Mammary epithelial cell (primary cell): ENCODE measurements at regions of chrX and their contacts with region 1.

Region 1: GRCh38 chrX:48696301-48697181 is at the start of gene SUV39H1:
- DNase-seq: peak; percentile 88
- H3K4me3 ChIP-seq: peak within 1 kb of the TSS; percentile 51 to 56 (median 56)
- H3K27ac ChIP-seq: peak within 1 kb of the TSS; percentile 66
- H3K4me1 ChIP-seq: peaks cover 7% of the 10 kb centered on the region
- H3K27me3 ChIP-seq: no peaks in the 10 kb centered on the region
- CTCF ChIP-seq: no peak
- total RNA-seq, gene SUV39H1: 2.8 to 11.4 TPM

Region 2: DNA sequence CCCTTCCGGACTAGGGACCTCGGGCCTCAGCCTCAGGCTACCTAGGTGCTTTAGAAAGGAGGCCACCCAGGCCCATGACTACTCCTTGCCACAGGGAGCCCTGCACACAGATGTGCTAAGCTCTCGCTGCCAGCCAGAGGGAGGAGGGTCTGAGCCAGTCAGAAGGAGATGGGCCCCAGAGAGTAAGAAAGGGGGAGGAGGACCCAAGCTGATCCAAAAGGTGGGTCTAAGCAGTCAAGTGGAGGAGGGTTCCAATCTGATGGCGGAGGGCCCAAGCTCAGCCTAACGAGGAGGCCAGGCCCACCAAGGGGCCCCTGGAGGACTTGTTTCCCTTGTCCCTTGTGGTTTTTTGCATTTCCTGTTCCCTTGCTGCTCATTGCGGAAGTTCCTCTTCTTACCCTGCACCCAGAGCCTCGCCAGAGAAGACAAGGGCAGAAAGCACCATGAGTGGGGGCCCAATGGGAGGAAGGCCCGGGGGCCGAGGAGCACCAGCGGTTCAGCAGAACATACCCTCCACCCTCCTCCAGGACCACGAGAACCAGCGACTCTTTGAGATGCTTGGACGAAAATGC is 13.0 kb before region 1 on chrX and contains the start of gene WAS:
- CTCF ChIA-PET with region 1: no interaction called
- dilution Hi-C with region 1: no loop called
- in situ Hi-C with region 1: no loop called
- intact Hi-C with region 1: loop called (anchors 2 kb)
- DNase-seq: no peak
- H3K4me3 ChIP-seq: no peak within 1 kb of the TSS
- H3K27ac ChIP-seq: no peak within 1 kb of the TSS
- H3K4me1 ChIP-seq: no peaks in the 10 kb centered on the region
- H3K27me3 ChIP-seq: no peaks in the 10 kb centered on the region
- CTCF ChIP-seq: no peak
- total RNA-seq, gene WAS: 0.16 TPM in 1 of 2 donors, not detected in the other

Region 3: GRCh38 chrX:48737213-48737938 is 40.8 kb after region 1 on chrX:
- CTCF ChIA-PET with region 1: no interaction called
- dilution Hi-C with region 1: loop called (anchors 5 kb)
- in situ Hi-C with region 1: no loop called
- intact Hi-C with region 1: loop called (anchors 2 kb)
- DNase-seq: peak; percentile 91
- H3K4me3 ChIP-seq: peak overlapping the region; percentile 53 to 61 (median 60)
- H3K27ac ChIP-seq: peak overlapping the region; percentile 63
- H3K4me1 ChIP-seq: peaks cover 7% of the 10 kb centered on the region
- H3K27me3 ChIP-seq: no peaks in the 10 kb centered on the region
- CTCF ChIP-seq: no peak